ENCODE measurements at regions of chr1 and their contacts with region 1.

Region 1: GRCh38 chr1:145858894-145859490 is at the start of gene PIAS3:
- DNase-seq: peak; percentile 84
- H3K4me3 Mint-ChIP-seq: peak within 1 kb of the TSS; percentile 87
- H3K27ac Mint-ChIP-seq: peak within 1 kb of the TSS; percentile 83
- H3K4me1 Mint-ChIP-seq: peaks cover 9% of the 10 kb centered on the region
- H3K27me3 Mint-ChIP-seq: no peaks in the 10 kb centered on the region
- total RNA-seq, gene PIAS3: 19.1 to 19.6 TPM

Region 2: DNA sequence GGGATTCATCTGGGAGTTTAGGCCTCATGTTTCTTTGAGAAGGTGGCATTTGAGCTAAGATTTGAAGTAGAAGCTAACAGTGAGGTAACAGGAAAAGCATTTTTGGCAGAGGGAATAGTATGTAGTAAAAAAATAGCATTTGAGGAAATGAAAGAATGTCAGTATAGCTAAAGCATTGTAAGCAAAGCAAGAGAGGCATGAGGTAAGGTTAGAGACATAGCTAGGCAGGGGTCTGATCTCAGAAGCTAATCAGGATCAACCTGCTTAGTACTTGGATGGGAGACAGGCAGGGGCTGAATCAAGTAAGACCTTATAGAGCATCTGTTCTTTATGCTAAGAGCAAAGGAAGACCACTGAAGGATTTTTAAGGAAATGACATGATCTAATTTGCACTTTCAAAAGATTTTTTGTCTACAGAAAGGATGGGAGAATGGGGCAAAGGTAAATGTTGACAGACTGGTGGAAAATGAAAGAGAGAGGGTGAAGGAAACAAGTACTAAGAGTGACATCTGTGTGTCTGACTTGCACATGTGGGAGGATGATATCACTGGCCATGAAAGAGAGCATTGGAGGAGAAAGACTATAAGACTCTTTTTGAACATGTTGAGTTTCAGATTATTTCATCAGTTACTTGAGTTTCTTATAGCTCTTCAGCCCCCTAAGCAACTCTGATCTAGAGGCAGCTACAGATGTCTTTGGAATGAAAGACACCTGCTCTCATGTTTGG is 30.9 kb before region 1 on chr1:
- CTCF ChIA-PET with region 1: interaction called, 4 read pairs
- intact Hi-C with region 1: loop called (anchors 1 kb)
- DNase-seq: peak; percentile 56
- H3K4me3 Mint-ChIP-seq: peak overlapping the region; percentile 7
- H3K27ac Mint-ChIP-seq: peak overlapping the region; percentile 95
- H3K4me1 Mint-ChIP-seq: peaks cover 44% of the 10 kb centered on the region
- H3K27me3 Mint-ChIP-seq: no peaks in the 10 kb centered on the region

Region 3: GRCh38 chr1:145871994-145872924 is 13.3 kb after region 1 on chr1:
- CTCF ChIA-PET with region 1: interaction called, 6 read pairs
- intact Hi-C with region 1: loop called (anchors 1 kb)
- DNase-seq: peak; percentile 47
- H3K4me3 Mint-ChIP-seq: peak overlapping the region; percentile 63
- H3K27ac Mint-ChIP-seq: no peak overlapping the region
- H3K4me1 Mint-ChIP-seq: peaks cover 14% of the 10 kb centered on the region
- H3K27me3 Mint-ChIP-seq: peaks cover 4% of the 10 kb centered on the region

Region 4: DNA sequence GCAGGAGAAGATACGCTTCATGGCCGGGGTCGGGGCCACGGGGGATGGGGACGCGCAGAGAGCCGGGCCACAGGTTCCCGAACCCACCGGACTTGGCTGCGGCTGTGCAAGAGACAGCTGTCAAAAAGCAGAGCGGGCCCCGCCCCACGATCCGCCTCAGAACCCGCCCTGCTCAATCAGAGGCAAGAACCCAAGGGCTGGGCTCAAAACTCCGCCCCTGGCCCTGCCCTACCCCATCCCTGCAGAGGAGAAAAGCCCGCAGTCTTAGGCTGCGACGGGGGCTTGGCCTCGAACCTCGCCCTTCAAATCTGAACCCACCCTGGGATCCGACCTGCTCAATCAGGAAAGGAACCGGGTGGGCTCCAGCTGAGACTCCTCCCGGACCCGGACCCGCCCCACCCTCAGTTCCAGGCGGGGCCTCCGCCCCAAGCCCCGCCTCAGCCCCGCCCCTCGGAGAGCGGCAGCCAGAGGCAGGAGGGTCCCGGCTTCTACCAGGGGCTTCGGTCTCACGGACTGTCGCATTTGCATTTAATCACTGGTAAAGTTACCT is 26.8 kb after region 1 on chr1 and contains the start of gene ANKRD35:
- CTCF ChIA-PET with region 1: interaction called, 4 read pairs
- intact Hi-C with region 1: loop called (anchors 2 kb)
- DNase-seq: peak; percentile 89
- H3K4me3 Mint-ChIP-seq: peak within 1 kb of the TSS; percentile 79
- H3K27ac Mint-ChIP-seq: no peak within 1 kb of the TSS
- H3K4me1 Mint-ChIP-seq: peaks cover 14% of the 10 kb centered on the region
- H3K27me3 Mint-ChIP-seq: peaks cover 16% of the 10 kb centered on the region
- total RNA-seq, gene ANKRD35: 0.19 to 0.20 TPM

Region 5: DNA sequence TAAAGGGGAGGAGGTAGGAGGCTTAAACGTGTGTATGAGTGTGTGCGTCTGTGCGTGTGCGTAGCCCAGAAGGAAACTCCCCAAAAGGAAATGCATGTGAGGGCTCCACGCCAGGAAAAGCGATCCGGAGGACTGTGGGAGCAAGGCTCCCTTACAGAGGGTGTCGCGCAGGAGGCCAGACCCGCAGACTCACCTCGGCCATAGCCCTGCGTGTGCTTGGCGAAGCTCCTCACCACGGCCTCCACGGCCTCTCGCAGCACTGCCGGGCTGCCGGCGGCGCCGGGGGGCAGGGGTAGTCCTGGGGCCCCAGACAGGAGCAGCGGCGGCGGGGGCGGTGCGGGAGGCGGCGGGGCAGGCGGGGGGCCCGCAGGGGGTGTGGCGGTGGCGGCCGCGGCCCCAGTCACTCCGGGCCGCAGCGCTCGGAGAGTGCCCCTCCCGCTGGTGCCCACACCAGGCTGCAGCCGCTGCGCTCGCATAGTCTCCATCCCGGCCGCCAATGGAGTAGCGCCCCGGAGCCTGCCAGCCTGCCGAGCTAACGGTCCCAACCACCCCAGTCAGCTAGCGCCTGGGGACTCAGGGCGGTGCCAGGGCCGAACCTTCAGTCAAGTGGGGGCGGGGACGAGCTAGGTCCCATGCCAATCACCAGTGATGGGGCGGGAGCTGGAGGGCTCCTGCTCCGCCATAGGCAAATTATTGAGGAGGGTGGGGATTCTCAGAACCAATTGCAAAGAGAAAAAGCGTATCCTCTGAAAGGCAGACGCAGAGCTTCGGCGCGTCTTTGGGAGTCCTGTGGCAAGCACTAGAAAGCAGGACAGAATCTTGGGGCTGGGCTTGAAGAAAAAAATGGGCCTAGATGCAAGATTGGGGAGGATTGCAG is 98.7 kb after region 1 on chr1 and contains the start of gene LIX1L:
- CTCF ChIA-PET with region 1: interaction called, 6 read pairs
- intact Hi-C with region 1: loop called (anchors 1 kb)
- DNase-seq: peak; percentile 98
- H3K4me3 Mint-ChIP-seq: peak within 1 kb of the TSS; percentile 83
- H3K27ac Mint-ChIP-seq: peak within 1 kb of the TSS; percentile 83
- H3K4me1 Mint-ChIP-seq: peaks cover 56% of the 10 kb centered on the region
- H3K27me3 Mint-ChIP-seq: no peaks in the 10 kb centered on the region
- total RNA-seq, gene LIX1L: 43.6 to 44.3 TPM

Measured in activated naive CD4-positive, alpha-beta T cell treated with anti-CD3 and anti-CD28 coated beads for 36 hours (primary cell).